ENCODE measurements at regions of chr22 and their contacts with region 1.

Region 1: DNA sequence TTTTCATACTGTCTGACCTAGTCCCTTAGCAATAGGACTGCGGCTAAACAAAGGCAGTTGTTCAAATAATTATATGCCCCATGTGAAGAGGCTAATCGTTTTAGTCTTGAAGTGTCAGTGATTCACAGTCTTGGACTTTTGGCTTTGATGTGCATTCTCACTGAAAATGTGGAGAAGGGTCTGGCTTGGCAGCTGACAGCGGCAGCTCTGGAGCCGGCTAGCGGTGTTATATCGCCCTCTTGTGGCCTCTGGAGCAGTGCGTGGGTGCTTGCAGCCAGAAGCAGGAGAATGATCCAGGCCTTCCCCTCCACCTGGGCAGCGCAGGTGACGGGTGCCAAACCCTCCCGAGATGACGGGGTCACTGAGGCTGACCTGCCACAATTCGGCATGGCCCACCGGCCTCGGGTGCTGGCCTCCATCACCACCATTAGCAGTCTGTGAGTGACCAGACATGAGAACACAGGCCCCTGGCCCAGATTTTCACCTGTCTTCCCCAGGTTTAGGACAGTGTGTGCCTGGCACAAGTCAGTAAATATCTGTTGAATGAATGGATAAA is 90.3 kb upstream of the PITPNB start:
- DNase-seq: no peak
- H3K4me3 ChIP-seq: no peak overlapping the region
- H3K27ac ChIP-seq: peak overlapping the region; percentile 57 to 71 (median 60)
- H3K4me1 ChIP-seq: peaks cover 24 to 47% (median 46%) of the 10 kb centered on the region in 4 donors
- H3K27me3 ChIP-seq: no peaks in the 10 kb centered on the region
- CTCF ChIP-seq: peak in 2 of 3 experiments; percentile 96
- EP300 ChIP-seq: no peak
- POLR2A ChIP-seq: no peak

Region 2: GRCh38 chr22:26756675-26757293 is 1252.6 kb before region 1 on chr22:
- intact Hi-C with region 1: loop called (anchors 5 kb)
- DNase-seq: no peak
- H3K4me3 ChIP-seq: peak overlapping the region; percentile 36 to 56 (median 44)
- H3K27ac ChIP-seq: no peak overlapping the region
- H3K4me1 ChIP-seq: peaks cover 4 to 9% (median 8%) of the 10 kb centered on the region in 4 donors
- H3K27me3 ChIP-seq: no peaks in the 10 kb centered on the region
- CTCF ChIP-seq: peak; percentile 96 to 98 (median 97)
- EP300 ChIP-seq: no peak
- POLR2A ChIP-seq: no peak

Region 3: GRCh38 chr22:27885977-27886842 is 123.1 kb before region 1 on chr22:
- intact Hi-C with region 1: loop called (anchors 2 kb)
- DNase-seq: no peak
- H3K4me3 ChIP-seq: no peak overlapping the region
- H3K27ac ChIP-seq: peak overlapping the region; percentile 74 to 85 (median 84)
- H3K4me1 ChIP-seq: peaks cover 48 to 88% (median 86%) of the 10 kb centered on the region in 4 donors
- H3K27me3 ChIP-seq: no peaks in the 10 kb centered on the region
- CTCF ChIP-seq: peak; percentile 91 to 97 (median 95)
- EP300 ChIP-seq: peak; percentile 14
- POLR2A ChIP-seq: no peak

Measured in esophagus muscularis mucosa (tissue), 4 donors.